ENCODE measurements at regions of chr9 and their contacts with region 1.

Region 1: GRCh38 chr9:90914868-90915483 is 113.4 kb downstream of the SYK start:
- DNase-seq: peak; percentile 90
- CTCF ChIP-seq: peak; percentile 71

Region 2: GRCh38 chr9:90900130-90900529 is 14.8 kb before region 1 on chr9:
- CTCF ChIA-PET with region 1: interaction called, 26 read pairs
- POLR2A ChIA-PET with region 1: interaction called, 9 read pairs
- DNase-seq: no peak
- CTCF ChIP-seq: no peak

Region 3: GRCh38 chr9:90929626-90930025 is 14.7 kb after region 1 on chr9:
- CTCF ChIA-PET with region 1: interaction called, 11 read pairs
- POLR2A ChIA-PET with region 1: no interaction called
- DNase-seq: no peak
- CTCF ChIP-seq: no peak

Region 4: DNA sequence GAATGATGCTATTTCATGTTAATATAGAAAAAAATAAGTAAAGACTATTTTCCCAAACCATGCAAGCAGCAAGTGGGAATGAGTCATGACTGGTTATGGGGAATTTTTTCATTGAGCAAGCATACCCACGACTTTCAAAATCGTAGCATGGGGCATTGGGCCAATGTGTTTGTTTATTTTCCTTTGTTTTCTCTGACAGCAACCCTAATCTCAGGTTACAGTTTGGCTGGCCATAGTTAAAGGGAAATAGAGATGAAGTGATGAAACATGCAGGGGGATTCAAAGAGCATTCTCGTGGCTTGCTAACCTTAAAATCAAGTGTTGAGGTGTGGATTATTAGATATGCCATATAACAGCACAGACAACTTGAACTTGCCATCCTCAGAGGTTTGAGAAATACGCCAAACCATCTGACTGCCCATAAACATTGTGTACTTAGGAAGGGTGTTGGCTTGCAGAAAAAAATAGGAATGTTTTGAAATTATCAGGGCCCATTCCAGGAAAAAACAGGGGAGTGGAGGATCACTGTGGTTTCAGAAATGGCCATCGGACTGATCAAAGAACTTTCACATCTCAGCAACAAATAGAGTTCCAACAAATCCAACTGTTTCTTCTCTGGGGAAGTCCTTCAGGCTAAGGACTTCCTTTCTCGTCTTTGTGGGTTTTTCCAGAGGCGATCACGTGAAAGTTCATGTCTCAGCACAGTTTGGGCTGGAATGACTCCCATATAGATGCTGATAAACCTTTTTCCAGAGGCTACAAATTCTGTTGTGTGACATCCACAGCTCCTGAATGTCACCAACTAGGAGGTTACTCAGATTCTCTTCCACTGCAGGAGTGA is 145.7 kb after region 1 on chr9:
- CTCF ChIA-PET with region 1: no interaction called
- POLR2A ChIA-PET with region 1: no interaction called
- DNase-seq: no peak
- CTCF ChIP-seq: no peak

Region 5: GRCh38 chr9:91089405-91090129 is 174.6 kb after region 1 on chr9:
- CTCF ChIA-PET with region 1: interaction called, 10 read pairs
- POLR2A ChIA-PET with region 1: no interaction called
- DNase-seq: peak; percentile 24
- CTCF ChIP-seq: peak; percentile 61

Region 6: GRCh38 chr9:91422758-91423711 is 508.1 kb after region 1 on chr9:
- CTCF ChIA-PET with region 1: interaction called, 121 read pairs
- POLR2A ChIA-PET with region 1: interaction called, 3 read pairs
- DNase-seq: peak; percentile 58
- CTCF ChIP-seq: peak; percentile 38

Region 7: DNA sequence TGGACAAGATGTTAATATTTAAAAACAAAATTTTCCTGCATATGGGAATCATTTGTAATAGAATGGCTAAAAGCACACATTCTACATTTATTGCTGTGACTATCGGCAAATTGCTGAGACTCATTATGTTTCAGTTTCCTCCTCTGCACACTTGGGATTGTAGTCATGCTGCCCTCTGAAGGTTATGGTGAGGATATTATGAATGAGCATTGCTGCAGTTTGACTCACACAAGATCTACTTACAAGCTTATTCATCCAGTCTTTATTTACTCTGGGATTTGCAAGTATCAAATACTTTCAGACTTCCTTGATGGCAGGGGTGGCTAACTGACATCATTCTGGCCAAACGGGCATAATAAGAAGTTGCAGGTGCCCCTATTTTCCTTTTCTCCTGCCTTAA is 518.2 kb after region 1 on chr9:
- CTCF ChIA-PET with region 1: interaction called, 121 read pairs
- POLR2A ChIA-PET with region 1: no interaction called
- DNase-seq: peak; percentile 36
- CTCF ChIP-seq: peak; percentile 45

Region 8: DNA sequence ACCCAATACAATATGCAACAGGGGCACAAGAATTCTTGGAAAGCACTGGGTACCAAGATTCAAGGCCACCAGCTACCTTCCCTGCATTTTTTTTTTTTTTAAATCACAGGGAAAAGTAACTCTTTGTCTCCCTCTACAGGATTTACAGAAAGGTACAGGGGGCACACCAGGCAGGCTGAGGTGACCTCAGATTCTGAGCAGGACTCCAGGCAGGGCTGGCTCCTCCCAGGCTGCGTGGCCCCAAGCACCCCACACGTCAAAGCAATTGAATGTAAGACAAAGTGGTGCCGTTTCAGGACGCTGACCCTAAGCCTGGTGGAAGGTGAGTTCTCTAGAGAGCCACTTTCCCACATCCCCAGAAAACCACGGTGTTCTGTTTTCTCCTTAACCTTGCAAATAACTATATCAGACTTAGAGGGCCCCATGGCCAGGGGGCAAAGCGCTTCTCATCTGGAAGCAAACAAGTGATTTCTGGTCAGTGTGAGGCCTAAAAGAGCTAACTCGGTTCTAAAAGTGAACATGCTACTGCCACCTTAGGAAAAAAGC is 812.4 kb after region 1 on chr9:
- CTCF ChIA-PET with region 1: interaction called, 27 read pairs
- POLR2A ChIA-PET with region 1: no interaction called
- DNase-seq: peak; percentile 78
- CTCF ChIP-seq: peak; percentile 74

Measured in GM10248 (cell line).